ENCODE measurements at regions of chr2 and their contacts with region 1.

Region 1: DNA sequence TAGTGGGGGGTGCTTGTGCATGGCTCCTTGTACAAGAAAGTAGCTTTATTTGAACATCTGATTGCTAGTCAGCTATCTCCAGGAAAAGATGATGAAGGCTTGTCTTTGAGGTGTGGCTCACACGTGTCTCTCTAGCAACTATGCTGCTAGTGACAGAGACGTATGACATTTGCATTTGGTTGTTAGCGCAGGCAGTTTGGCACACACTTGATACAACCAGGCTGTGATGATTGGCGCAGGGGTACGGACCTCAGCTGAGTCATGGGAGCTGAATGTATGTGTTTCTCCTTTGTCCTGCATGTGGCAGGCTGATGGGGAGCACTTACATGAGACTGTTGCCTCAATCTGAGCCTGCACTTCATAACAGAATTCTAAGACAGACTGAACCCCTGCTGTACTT is 29.6 kb downstream of the PTCD3 start:
- DNase-seq: no peak
- ATAC-seq: no peak
- H3K4me3 ChIP-seq: no peak overlapping the region
- H3K27ac ChIP-seq: no peak overlapping the region
- H3K4me1 ChIP-seq: no peaks in the 10 kb centered on the region
- H3K27me3 ChIP-seq: no peaks in the 10 kb centered on the region
- CTCF ChIP-seq: no peak
- EP300 ChIP-seq: no peak
- POLR2A ChIP-seq: no peak
- RAD21 ChIP-seq: no peak

Region 2: GRCh38 chr2:85504778-85505323 is 630.8 kb before region 1 on chr2:
- CTCF ChIA-PET with region 1: no interaction called
- POLR2A ChIA-PET with region 1: no interaction called
- RAD21 ChIA-PET with region 1: no interaction called
- SMC1A ChIA-PET with region 1: no interaction called
- in situ Hi-C with region 1: no loop called
- intact Hi-C with region 1: no loop called
- DNase-seq: no peak
- ATAC-seq: no peak
- H3K4me3 ChIP-seq: no peak overlapping the region
- H3K27ac ChIP-seq: no peak overlapping the region
- H3K4me1 ChIP-seq: no peaks in the 10 kb centered on the region
- H3K27me3 ChIP-seq: 0 out of 4 replicates have a peak, but pooled peaks cover 0 to 1% of the 10 kb centered on the region in 2 experiments
- CTCF ChIP-seq: no peak
- EP300 ChIP-seq: no peak
- POLR2A ChIP-seq: no peak
- RAD21 ChIP-seq: no peak

Region 3: GRCh38 chr2:86124683-86125082 is 11.0 kb before region 1 on chr2:
- CTCF ChIA-PET with region 1: no interaction called
- POLR2A ChIA-PET with region 1: interaction called, 4 read pairs
- RAD21 ChIA-PET with region 1: interaction called, 3 read pairs
- SMC1A ChIA-PET with region 1: interaction called, 12 read pairs
- in situ Hi-C with region 1: no loop called
- intact Hi-C with region 1: no loop called
- DNase-seq: no peak
- ATAC-seq: no peak
- H3K4me3 ChIP-seq: no peak overlapping the region
- H3K27ac ChIP-seq: no peak overlapping the region
- H3K4me1 ChIP-seq: peaks cover 4% of the 10 kb centered on the region; the same call in 1 of the 2 replicates
- H3K27me3 ChIP-seq: no peaks in the 10 kb centered on the region
- CTCF ChIP-seq: no peak
- EP300 ChIP-seq: no peak
- POLR2A ChIP-seq: no peak
- RAD21 ChIP-seq: no peak

Measured in GM12878 (cell line).